Heart left ventricle (tissue), 16 donors: ENCODE measurements at regions of chr2 and their contacts with region 1.

Region 1: GRCh38 chr2:12824351-12824777 is 107.6 kb downstream of the TRIB2 start:
- DNase-seq: peak in 4 of 5 donors; percentile 58 to 79 (median 70)
- ATAC-seq: peak; percentile 48 to 81 (median 67)
- H3K4me3 ChIP-seq: peak overlapping the region in 1 of 12 donors; percentile 10
- H3K27ac ChIP-seq: peak overlapping the region; percentile 79 to 95 (median 86)
- H3K4me1 ChIP-seq: peaks cover 9 to 49% (median 36%) of the 10 kb centered on the region in 12 donors
- H3K27me3 ChIP-seq: no peaks in the 10 kb centered on the region
- CTCF ChIP-seq: no peak
- POLR2A ChIP-seq: no peak

Region 2: DNA sequence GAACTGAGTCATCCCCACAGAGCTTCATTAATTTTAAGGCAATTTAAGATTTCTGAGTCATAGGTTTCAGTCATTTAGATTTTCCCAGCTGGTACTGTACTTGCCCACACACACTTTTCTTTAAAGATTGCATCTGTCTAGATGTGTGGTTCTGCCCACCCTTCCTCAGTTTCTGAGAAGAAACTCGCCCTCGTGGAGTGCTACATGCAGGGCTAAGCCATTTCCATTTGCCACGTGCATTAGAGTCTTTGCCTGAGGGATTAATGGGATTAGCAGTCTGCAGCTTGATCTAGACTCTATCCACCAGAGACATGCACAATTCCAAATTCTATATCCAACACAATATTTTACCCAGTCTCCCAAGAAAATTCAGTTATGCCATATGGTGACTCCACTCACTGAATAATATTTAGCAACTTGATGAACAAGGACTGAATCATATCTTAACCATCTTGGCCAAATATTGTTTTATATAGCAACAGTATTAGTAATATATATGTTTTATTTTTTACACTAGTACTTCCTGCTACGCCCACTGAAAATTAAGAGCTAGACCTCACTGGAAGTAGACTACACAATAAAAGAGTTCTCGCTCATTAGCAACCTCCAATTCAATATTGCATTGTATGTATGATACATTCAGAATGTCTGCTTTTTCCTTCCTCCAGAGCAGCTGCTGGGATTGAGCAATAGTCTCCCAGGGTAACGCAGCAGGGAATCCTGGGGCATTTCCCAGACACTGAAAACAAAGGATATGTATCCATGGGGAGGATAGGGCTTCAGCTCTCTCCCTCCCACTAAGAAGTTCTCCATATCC is 121.9 kb before region 1 on chr2:
- intact Hi-C with region 1: no loop called
- DNase-seq: peak in 2 of 5 donors; percentile 43 to 46
- ATAC-seq: peak; percentile 37 to 89 (median 76)
- H3K4me3 ChIP-seq: no peak overlapping the region
- H3K27ac ChIP-seq: peak overlapping the region in 1 of 12 donors; percentile 21
- H3K4me1 ChIP-seq: peaks cover 0 to 18% (median 2%) of the 10 kb centered on the region in 12 donors
- H3K27me3 ChIP-seq: no peaks in the 10 kb centered on the region
- CTCF ChIP-seq: no peak
- POLR2A ChIP-seq: no peak

Region 3: DNA sequence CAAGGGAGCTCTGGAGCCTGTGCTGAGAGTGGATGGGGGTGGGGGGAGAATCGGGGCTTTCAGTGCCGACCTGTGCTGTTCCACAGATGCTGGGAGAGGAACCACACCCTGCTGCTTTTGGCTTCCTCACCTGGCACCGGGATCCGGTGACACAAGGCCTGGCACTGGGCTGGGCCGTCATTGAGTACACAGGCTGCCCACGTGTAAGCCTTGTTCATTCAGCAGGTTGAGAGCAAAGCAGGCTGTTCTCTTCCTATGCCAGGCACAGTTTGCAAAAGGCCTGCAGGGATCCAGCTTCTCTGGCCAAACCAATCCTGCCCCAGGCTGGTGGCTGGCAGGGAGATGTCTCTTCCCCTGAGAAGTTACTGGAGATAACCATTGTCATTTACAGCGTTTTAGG is 90.5 kb before region 1 on chr2:
- intact Hi-C with region 1: loop called in 3 of 10 experiments (anchors 5 to 10 kb)
- DNase-seq: peak in 4 of 5 donors; percentile 45 to 79 (median 72)
- ATAC-seq: peak; percentile 68 to 79 (median 72)
- H3K4me3 ChIP-seq: no peak overlapping the region
- H3K27ac ChIP-seq: peak overlapping the region; percentile 51 to 83 (median 74)
- H3K4me1 ChIP-seq: peaks cover 31 to 96% (median 82%) of the 10 kb centered on the region in 12 donors
- H3K27me3 ChIP-seq: no peaks in the 10 kb centered on the region
- CTCF ChIP-seq: no peak
- POLR2A ChIP-seq: peak in 1 of 2 donors; percentile 27

Region 4: GRCh38 chr2:12787891-12788801 is 36.2 kb before region 1 on chr2:
- intact Hi-C with region 1: loop called in 1 of 10 experiments (anchors 5 kb)
- DNase-seq: peak in 4 of 5 donors; percentile 35 to 53 (median 46)
- ATAC-seq: peak; percentile 61 to 90 (median 79)
- H3K4me3 ChIP-seq: peak overlapping the region in 1 of 12 donors; percentile 1
- H3K27ac ChIP-seq: peak overlapping the region; percentile 25 to 77 (median 60)
- H3K4me1 ChIP-seq: peaks cover 0 to 19% (median 4%) of the 10 kb centered on the region in 12 donors
- H3K27me3 ChIP-seq: no peaks in the 10 kb centered on the region
- CTCF ChIP-seq: no peak
- POLR2A ChIP-seq: no peak

Region 5: GRCh38 chr2:12797815-12798214 is 26.5 kb before region 1 on chr2:
- intact Hi-C with region 1: loop called in 1 of 10 experiments (anchors 2 kb)
- DNase-seq: no peak
- ATAC-seq: peak; percentile 28 to 81 (median 73)
- H3K4me3 ChIP-seq: no peak overlapping the region
- H3K27ac ChIP-seq: peak overlapping the region in 11 of 12 donors; percentile 31 to 80 (median 64)
- H3K4me1 ChIP-seq: peaks cover 0 to 27% (median 6%) of the 10 kb centered on the region in 12 donors
- H3K27me3 ChIP-seq: no peaks in the 10 kb centered on the region
- CTCF ChIP-seq: no peak
- POLR2A ChIP-seq: no peak

Region 6: DNA sequence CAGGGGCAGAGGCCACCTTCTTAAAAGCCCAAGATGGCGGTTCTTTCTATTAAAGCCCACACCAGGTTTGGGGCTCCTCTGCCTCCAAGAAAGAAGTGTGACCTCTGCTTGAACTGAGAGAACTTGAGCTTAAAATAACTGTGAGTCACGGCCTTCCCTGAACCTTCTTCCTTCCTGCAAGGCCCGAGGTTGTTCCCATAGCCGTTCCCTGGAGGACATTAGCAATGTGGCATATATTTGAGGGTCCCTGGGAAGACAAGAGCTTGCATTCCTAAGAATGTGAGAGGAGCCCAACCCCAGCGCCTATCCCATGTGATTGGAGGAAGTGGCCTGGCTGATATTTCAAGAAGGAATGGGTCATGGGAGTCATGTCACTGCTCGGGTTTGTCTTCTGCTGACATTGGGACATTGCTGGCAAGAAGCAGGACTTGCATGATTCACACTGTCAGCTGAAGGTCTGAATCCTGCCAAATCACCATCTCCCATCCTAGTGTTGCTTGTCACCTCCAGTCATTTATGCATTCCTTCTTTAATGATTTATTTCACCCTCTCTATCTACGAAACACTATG is 60.4 kb after region 1 on chr2:
- intact Hi-C with region 1: loop called in 1 of 10 experiments (anchors 5 kb)
- DNase-seq: peak; percentile 40 to 79 (median 58)
- ATAC-seq: peak; percentile 51 to 90 (median 90)
- H3K4me3 ChIP-seq: no peak overlapping the region
- H3K27ac ChIP-seq: peak overlapping the region in 11 of 12 donors; percentile 22 to 72 (median 56)
- H3K4me1 ChIP-seq: peaks cover 13 to 26% (median 22%) of the 10 kb centered on the region in 12 donors
- H3K27me3 ChIP-seq: no peaks in the 10 kb centered on the region
- CTCF ChIP-seq: no peak
- POLR2A ChIP-seq: no peak

Region 7: GRCh38 chr2:12918835-12919445 is 94.6 kb after region 1 on chr2:
- intact Hi-C with region 1: loop called in 6 of 10 experiments (anchors 5 to 10 kb)
- DNase-seq: peak; percentile 57 to 88 (median 71)
- ATAC-seq: peak; percentile 85 to 97 (median 94)
- H3K4me3 ChIP-seq: peak overlapping the region in 1 of 12 donors; percentile 2
- H3K27ac ChIP-seq: peak overlapping the region; percentile 39 to 90 (median 77)
- H3K4me1 ChIP-seq: peaks cover 0 to 28% (median 16%) of the 10 kb centered on the region in 12 donors
- H3K27me3 ChIP-seq: no peaks in the 10 kb centered on the region
- CTCF ChIP-seq: no peak
- POLR2A ChIP-seq: no peak

Region 8: GRCh38 chr2:12923907-12924610 is 99.7 kb after region 1 on chr2:
- intact Hi-C with region 1: loop called in 7 of 10 experiments (anchors 5 to 10 kb)
- DNase-seq: no peak
- ATAC-seq: no peak
- H3K4me3 ChIP-seq: no peak overlapping the region
- H3K27ac ChIP-seq: no peak overlapping the region
- H3K4me1 ChIP-seq: peaks cover 0 to 25% (median 13%) of the 10 kb centered on the region in 12 donors
- H3K27me3 ChIP-seq: no peaks in the 10 kb centered on the region
- CTCF ChIP-seq: no peak
- POLR2A ChIP-seq: no peak